MCF 10A (cell line): ENCODE measurements at regions of chr1 and their contacts with region 1.

Region 1: GRCh38 chr1:186212544-186213226 is 162.4 kb downstream of the TPR start:
- DNase-seq: peak; percentile 91
- H3K4me3 Mint-ChIP-seq: no peak overlapping the region
- H3K27ac Mint-ChIP-seq: peak overlapping the region; percentile 35
- H3K4me1 Mint-ChIP-seq: peaks cover 8% of the 10 kb centered on the region
- H3K27me3 Mint-ChIP-seq: no peaks in the 10 kb centered on the region
- CTCF ChIP-seq: peak; percentile 99

Region 2: GRCh38 chr1:185720633-185721272 is 491.9 kb before region 1 on chr1:
- CTCF ChIA-PET with region 1: interaction called, 60 read pairs
- POLR2A ChIA-PET with region 1: interaction called, 3 read pairs
- intact Hi-C with region 1: loop called (anchors 1 kb)
- DNase-seq: peak; percentile 65
- H3K4me3 Mint-ChIP-seq: no peak overlapping the region
- H3K27ac Mint-ChIP-seq: no peak overlapping the region
- H3K4me1 Mint-ChIP-seq: peaks cover 22% of the 10 kb centered on the region
- H3K27me3 Mint-ChIP-seq: no peaks in the 10 kb centered on the region
- CTCF ChIP-seq: peak; percentile 63

Region 3: GRCh38 chr1:186002421-186002820 is 210.3 kb before region 1 on chr1:
- CTCF ChIA-PET with region 1: no interaction called
- POLR2A ChIA-PET with region 1: no interaction called
- intact Hi-C with region 1: loop called (anchors 5 kb)
- DNase-seq: peak; percentile 10
- H3K4me3 Mint-ChIP-seq: no peak overlapping the region
- H3K27ac Mint-ChIP-seq: no peak overlapping the region
- H3K4me1 Mint-ChIP-seq: no peaks in the 10 kb centered on the region
- H3K27me3 Mint-ChIP-seq: no peaks in the 10 kb centered on the region
- CTCF ChIP-seq: no peak

Region 4: DNA sequence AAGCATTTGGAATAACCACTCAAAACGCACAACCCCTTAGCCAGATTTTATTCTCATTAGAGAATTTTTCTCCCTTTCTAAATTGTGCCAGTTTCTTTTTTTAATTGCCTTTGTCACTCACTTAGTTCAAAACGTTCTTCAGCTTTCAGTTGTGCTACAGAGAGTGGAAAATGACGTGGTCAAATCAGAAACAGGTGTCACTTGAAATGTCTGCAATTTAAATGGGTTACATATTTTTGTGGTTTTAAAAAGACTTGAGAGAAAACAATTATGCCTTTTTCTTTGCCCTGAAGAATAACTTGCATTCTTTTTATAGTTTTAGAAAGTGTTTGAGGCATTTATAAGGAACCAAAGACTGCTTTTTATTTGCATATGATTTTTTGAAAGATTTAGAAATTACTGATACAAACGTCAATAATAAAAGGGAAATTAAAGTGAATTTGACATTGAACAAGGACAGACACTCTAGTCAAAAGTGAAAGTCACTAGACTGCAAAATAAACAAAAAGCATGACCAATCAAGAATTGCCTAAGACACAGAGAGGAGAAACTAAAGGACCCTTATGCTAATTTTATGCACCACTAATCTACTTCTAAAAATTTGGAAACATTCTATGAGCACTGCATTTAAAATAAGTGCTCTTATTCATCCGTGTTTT is 28.6 kb before region 1 on chr1:
- CTCF ChIA-PET with region 1: interaction called, 27 read pairs
- POLR2A ChIA-PET with region 1: interaction called, 4 read pairs
- intact Hi-C with region 1: no loop called
- DNase-seq: peak; percentile 42
- H3K4me3 Mint-ChIP-seq: peak overlapping the region; percentile 33
- H3K27ac Mint-ChIP-seq: peak overlapping the region; percentile 63
- H3K4me1 Mint-ChIP-seq: peaks cover 47% of the 10 kb centered on the region
- H3K27me3 Mint-ChIP-seq: no peaks in the 10 kb centered on the region
- CTCF ChIP-seq: no peak

Region 5: DNA sequence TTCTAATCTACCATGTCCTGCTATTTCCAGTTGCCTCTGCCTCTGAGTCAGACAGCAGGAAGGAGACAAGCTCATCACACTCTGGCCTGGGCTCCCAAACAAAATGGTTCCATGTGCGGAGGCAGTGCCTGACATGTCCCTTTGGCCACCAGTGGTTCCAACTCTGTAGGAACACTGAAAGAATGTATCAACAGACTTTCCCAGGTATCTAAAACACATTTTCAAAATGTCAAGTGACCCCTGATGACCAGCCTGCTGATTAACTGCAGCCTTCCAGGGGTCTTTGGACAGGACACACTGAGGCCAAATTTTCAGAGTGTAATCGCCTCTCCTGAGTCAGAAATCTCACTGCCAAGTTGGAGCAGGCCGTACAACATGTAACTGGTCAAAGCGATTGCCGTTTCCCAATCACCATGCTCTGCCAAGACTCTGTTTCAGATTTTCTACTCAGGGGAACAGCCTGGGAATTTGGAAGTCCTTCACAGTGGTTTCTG is 10.4 kb before region 1 on chr1:
- CTCF ChIA-PET with region 1: interaction called, 20 read pairs
- POLR2A ChIA-PET with region 1: interaction called, 3 read pairs
- intact Hi-C with region 1: no loop called
- DNase-seq: no peak
- H3K4me3 Mint-ChIP-seq: no peak overlapping the region
- H3K27ac Mint-ChIP-seq: no peak overlapping the region
- H3K4me1 Mint-ChIP-seq: no peaks in the 10 kb centered on the region
- H3K27me3 Mint-ChIP-seq: no peaks in the 10 kb centered on the region
- CTCF ChIP-seq: no peak

Region 6: GRCh38 chr1:186272486-186272885 is 59.8 kb after region 1 on chr1:
- CTCF ChIA-PET with region 1: no interaction called
- POLR2A ChIA-PET with region 1: no interaction called
- intact Hi-C with region 1: no loop called
- DNase-seq: peak; percentile 30
- H3K4me3 Mint-ChIP-seq: no peak overlapping the region
- H3K27ac Mint-ChIP-seq: no peak overlapping the region
- H3K4me1 Mint-ChIP-seq: no peaks in the 10 kb centered on the region
- H3K27me3 Mint-ChIP-seq: no peaks in the 10 kb centered on the region
- CTCF ChIP-seq: peak; percentile 9

Region 7: DNA sequence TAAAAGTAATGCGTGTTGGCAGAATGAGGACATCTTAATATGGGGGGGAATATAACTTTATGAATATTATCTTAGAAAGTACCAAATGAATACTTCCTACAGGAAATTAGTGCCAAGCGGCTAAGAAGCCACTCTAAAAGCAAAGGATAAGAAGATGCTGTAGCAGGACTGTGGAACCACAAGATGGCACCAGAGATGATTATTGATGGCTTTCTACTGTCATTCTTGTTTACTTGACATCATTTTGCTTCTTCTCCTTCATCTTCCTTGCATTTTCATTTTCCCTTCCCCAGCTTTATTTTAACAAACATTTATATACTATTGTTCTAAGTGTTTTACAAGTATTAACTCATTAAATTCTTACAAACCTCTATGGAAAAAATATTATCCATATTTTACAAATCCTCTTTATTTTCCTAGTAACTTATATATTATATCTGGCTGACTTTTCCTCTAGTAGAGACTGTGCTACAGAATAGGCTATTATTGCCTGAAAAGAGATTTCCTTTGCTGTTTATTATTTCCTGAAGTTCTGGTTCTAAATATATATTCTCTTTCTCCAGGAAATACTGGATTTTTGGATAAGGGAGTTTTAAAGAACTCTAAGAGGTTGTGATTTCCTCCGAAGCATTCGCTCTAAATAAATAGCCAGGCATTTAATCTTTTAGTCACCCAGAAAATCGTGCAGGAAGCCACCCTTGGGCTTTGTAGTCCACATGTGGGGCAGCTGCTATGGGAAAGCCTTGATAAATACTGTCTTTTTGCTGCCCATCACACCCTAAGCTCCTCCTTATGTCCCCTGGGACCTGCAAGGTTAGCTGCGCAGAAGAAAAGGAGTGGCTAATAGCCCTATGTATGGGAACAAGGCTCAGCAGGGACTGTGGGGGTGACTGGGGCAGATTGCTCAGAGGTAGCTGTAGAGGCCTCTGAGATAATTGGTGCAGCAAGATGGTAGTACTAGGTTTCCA is 92.6 kb after region 1 on chr1:
- CTCF ChIA-PET with region 1: no interaction called
- POLR2A ChIA-PET with region 1: no interaction called
- intact Hi-C with region 1: no loop called
- DNase-seq: peak; percentile 60
- H3K4me3 Mint-ChIP-seq: no peak overlapping the region
- H3K27ac Mint-ChIP-seq: no peak overlapping the region
- H3K4me1 Mint-ChIP-seq: no peaks in the 10 kb centered on the region
- H3K27me3 Mint-ChIP-seq: no peaks in the 10 kb centered on the region
- CTCF ChIP-seq: peak; percentile 61